Activated CD4-positive, alpha-beta T cell treated with anti-CD3 and anti-CD28 coated beads for 36 hours (primary cell): ENCODE measurements at regions of chr20 and their contacts with region 1.

Region 1: GRCh38 chr20:32652739-32653526 is 20.8 kb downstream of the C20orf203 start:
- DNase-seq: peak; percentile 93
- ATAC-seq: peak; percentile 98
- H3K4me3 Mint-ChIP-seq: no peak overlapping the region
- H3K27ac Mint-ChIP-seq: no peak overlapping the region
- H3K4me1 Mint-ChIP-seq: peaks cover 12% of the 10 kb centered on the region
- H3K27me3 Mint-ChIP-seq: no peaks in the 10 kb centered on the region

Region 2: GRCh38 chr20:31822421-31823330 is 830.3 kb before region 1 on chr20:
- CTCF ChIA-PET with region 1: no interaction called
- POLR2A ChIA-PET with region 1: no interaction called
- intact Hi-C with region 1: loop called in 1 of 2 experiments (anchors 2 kb)
- DNase-seq: peak; percentile 86
- ATAC-seq: peak; percentile 90
- H3K4me3 Mint-ChIP-seq: no peak overlapping the region
- H3K27ac Mint-ChIP-seq: no peak overlapping the region
- H3K4me1 Mint-ChIP-seq: peaks cover 4% of the 10 kb centered on the region
- H3K27me3 Mint-ChIP-seq: no peaks in the 10 kb centered on the region

Region 3: GRCh38 chr20:32031007-32031958 is 621.6 kb before region 1 on chr20:
- CTCF ChIA-PET with region 1: no interaction called
- POLR2A ChIA-PET with region 1: no interaction called
- intact Hi-C with region 1: loop called in 1 of 2 experiments (anchors 10 kb)
- DNase-seq: peak; percentile 75
- ATAC-seq: peak; percentile 79
- H3K4me3 Mint-ChIP-seq: no peak overlapping the region
- H3K27ac Mint-ChIP-seq: no peak overlapping the region
- H3K4me1 Mint-ChIP-seq: no peaks in the 10 kb centered on the region
- H3K27me3 Mint-ChIP-seq: peaks cover 23% of the 10 kb centered on the region

Region 4: DNA sequence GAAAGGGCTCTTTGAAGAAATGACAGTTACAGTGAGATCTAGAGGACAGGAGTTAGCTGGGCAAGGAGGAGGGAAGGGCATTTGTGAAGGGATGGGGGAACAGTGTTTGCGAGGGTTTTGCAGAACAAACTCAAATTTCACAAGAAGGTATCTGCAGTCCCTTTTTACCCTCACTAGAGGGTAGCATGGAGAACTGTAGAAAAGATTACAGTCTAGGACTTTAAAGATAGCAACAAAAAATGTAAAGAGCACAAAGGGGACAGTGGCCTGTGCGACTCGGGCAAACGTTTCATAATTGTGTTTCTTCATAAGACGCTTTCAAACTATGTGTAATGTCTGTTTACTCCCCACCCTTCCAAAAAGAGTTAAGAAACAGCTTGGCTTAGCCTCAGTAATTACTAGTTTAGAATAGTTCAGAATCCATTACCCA is 316.0 kb before region 1 on chr20:
- CTCF ChIA-PET with region 1: no interaction called
- POLR2A ChIA-PET with region 1: no interaction called
- intact Hi-C with region 1: loop called in 1 of 2 experiments (anchors 5 kb)
- DNase-seq: no peak
- ATAC-seq: no peak
- H3K4me3 Mint-ChIP-seq: no peak overlapping the region
- H3K27ac Mint-ChIP-seq: no peak overlapping the region
- H3K4me1 Mint-ChIP-seq: peaks cover 41% of the 10 kb centered on the region
- H3K27me3 Mint-ChIP-seq: no peaks in the 10 kb centered on the region

Region 5: GRCh38 chr20:32484958-32485769 is 167.8 kb before region 1 on chr20:
- CTCF ChIA-PET with region 1: interaction called, 8 read pairs
- POLR2A ChIA-PET with region 1: no interaction called
- intact Hi-C with region 1: loop called in 1 of 2 experiments (anchors 1 kb)
- DNase-seq: peak; percentile 90
- ATAC-seq: peak; percentile 85
- H3K4me3 Mint-ChIP-seq: peak overlapping the region; percentile 80
- H3K27ac Mint-ChIP-seq: peak overlapping the region; percentile 91
- H3K4me1 Mint-ChIP-seq: peaks cover 34% of the 10 kb centered on the region
- H3K27me3 Mint-ChIP-seq: no peaks in the 10 kb centered on the region

Region 6: DNA sequence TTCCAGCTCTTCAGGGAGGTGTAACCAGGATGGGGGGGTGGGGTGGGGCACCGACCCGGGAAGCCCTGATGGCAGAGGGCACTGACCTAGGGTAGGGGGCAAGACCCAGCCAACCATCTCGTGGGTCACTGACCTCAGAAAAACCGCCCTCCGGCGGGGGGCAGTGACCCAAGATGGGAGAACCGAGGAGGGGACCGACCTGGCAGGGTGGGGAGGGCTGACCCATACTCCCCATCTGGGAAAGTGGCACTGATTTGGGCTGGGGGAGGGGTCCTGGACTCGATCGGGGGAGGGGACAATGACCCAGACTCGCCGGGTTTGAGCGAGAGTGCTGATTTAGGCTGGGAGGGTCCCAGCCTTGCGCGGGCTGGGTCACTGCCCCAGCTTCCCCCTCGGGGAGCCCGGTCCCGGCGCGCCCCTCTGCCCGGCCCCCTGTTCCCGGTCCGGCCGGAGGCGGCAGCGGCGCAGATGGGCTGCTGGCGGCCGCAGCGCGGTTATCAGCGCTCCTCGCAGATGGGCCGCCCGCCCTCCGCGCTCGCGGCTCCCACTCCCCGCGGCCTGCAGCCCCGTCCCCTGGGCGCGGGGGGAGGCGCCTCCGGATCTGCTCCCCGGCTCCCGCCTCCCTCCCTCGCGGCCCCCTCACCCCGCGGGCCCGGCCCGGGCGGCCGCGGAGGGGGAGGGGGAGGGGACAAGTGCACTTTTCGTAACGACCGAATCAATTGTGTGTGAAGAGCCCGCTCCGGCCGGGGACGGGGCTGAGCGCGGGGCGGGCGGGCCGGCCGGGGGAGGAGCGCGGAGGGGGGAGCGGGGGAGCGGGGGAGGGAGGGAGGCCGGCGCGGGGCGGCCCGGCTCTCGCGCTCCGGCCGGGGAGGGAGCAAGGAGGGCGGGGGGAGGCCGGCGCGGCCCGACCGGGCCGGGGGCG is 70.0 kb before region 1 on chr20:
- CTCF ChIA-PET with region 1: interaction called, 5 read pairs
- POLR2A ChIA-PET with region 1: no interaction called
- intact Hi-C with region 1: loop called in 1 of 2 experiments (anchors 1 kb)
- DNase-seq: peak; percentile 49
- ATAC-seq: no peak
- H3K4me3 Mint-ChIP-seq: peak overlapping the region; percentile 52
- H3K27ac Mint-ChIP-seq: no peak overlapping the region
- H3K4me1 Mint-ChIP-seq: peaks cover 55% of the 10 kb centered on the region
- H3K27me3 Mint-ChIP-seq: peaks cover 5% of the 10 kb centered on the region

Region 7: GRCh38 chr20:32596681-32597252 is 56.2 kb before region 1 on chr20:
- CTCF ChIA-PET with region 1: no interaction called
- POLR2A ChIA-PET with region 1: no interaction called
- intact Hi-C with region 1: no loop called
- DNase-seq: no peak
- ATAC-seq: no peak
- H3K4me3 Mint-ChIP-seq: no peak overlapping the region
- H3K27ac Mint-ChIP-seq: no peak overlapping the region
- H3K4me1 Mint-ChIP-seq: peaks cover 4% of the 10 kb centered on the region
- H3K27me3 Mint-ChIP-seq: no peaks in the 10 kb centered on the region